Caco-2 (cell line): ENCODE measurements at regions of chr2 and their contacts with region 1.

Region 1: DNA sequence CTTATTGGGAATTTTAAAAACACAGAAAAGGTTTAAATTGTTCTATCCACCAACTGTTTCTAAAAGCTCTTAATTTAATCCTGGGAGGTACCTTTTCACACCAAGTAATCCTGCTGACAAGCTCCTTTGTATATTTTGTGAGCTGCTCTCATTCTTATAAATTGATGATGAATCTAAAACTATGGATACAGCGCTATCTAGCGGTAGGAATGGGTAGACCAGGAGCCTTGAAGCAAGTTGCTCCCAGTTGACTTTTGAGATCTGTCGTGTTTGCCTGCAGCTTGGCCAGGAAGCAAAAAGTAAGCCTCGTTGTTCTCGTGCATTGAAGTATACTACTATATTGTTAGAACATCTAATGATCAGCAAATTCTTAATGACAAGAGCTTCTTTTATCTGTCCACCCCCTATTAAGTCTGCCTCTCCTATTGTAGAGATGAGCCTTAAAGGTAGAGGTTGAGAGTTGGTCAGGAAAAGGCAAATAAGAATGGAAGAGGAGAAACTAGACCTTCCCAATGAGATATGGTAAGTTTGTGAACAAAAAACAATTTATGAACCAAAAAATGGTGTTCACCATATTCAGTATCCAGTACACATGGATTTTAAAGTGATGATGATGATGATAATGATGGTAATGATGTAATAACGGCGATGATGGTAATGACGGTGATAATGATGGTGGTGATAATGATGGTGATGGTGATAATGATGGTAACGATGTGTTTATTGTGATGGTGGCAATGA is 212.0 kb upstream of the NCKAP5 start:
- DNase-seq: peak; percentile 56 to 78
- H3K4me3 ChIP-seq: no peak overlapping the region
- H3K4me3 Mint-ChIP-seq: no peak overlapping the region
- H3K27ac Mint-ChIP-seq: no peak overlapping the region
- H3K4me1 ChIP-seq: 0 out of 2 replicates have a peak, but pooled peaks cover 4% of the 10 kb centered on the region
- H3K4me1 Mint-ChIP-seq: no peaks in the 10 kb centered on the region
- H3K27me3 ChIP-seq: no peaks in the 10 kb centered on the region
- H3K27me3 Mint-ChIP-seq: no peaks in the 10 kb centered on the region
- CTCF ChIP-seq: peak; percentile 84 to 91

Region 2: GRCh38 chr2:133266041-133266925 is 514.0 kb before region 1 on chr2:
- CTCF ChIA-PET with region 1: interaction called, 3 read pairs
- POLR2A ChIA-PET with region 1: no interaction called
- intact Hi-C with region 1: loop called (anchors 10 kb)
- DNase-seq: no peak
- H3K4me3 ChIP-seq: peak overlapping the region; percentile 24; the same call in 1 of the 2 replicates
- H3K4me3 Mint-ChIP-seq: peak overlapping the region; percentile 66
- H3K27ac Mint-ChIP-seq: no peak overlapping the region
- H3K4me1 ChIP-seq: no peaks in the 10 kb centered on the region
- H3K4me1 Mint-ChIP-seq: peaks cover 15% of the 10 kb centered on the region
- H3K27me3 ChIP-seq: no peaks in the 10 kb centered on the region
- H3K27me3 Mint-ChIP-seq: no peaks in the 10 kb centered on the region
- CTCF ChIP-seq: no peak

Region 3: DNA sequence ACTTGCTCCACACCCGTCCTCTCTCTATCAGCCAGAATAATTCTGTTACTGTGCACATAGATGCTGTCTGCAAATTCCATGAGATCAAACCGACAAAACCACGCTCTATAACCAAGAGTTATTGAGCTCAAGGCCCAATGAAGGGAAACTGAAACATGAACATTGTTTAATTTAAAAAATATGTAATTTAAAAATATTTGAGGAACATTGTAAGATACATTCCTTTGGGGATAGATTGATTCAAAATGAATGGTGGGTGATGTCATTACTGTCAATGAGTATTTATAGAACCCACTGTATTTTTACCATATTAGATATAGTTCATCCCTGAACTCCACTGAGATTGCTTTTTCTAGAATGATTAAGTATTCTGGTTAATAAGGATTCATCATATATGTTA is 262.4 kb before region 1 on chr2:
- CTCF ChIA-PET with region 1: interaction called, 13 read pairs
- POLR2A ChIA-PET with region 1: no interaction called
- intact Hi-C with region 1: no loop called
- DNase-seq: no peak
- H3K4me3 ChIP-seq: no peak overlapping the region
- H3K4me3 Mint-ChIP-seq: no peak overlapping the region
- H3K27ac Mint-ChIP-seq: no peak overlapping the region
- H3K4me1 ChIP-seq: no peaks in the 10 kb centered on the region
- H3K4me1 Mint-ChIP-seq: no peaks in the 10 kb centered on the region
- H3K27me3 ChIP-seq: no peaks in the 10 kb centered on the region
- H3K27me3 Mint-ChIP-seq: no peaks in the 10 kb centered on the region
- CTCF ChIP-seq: no peak

Region 4: DNA sequence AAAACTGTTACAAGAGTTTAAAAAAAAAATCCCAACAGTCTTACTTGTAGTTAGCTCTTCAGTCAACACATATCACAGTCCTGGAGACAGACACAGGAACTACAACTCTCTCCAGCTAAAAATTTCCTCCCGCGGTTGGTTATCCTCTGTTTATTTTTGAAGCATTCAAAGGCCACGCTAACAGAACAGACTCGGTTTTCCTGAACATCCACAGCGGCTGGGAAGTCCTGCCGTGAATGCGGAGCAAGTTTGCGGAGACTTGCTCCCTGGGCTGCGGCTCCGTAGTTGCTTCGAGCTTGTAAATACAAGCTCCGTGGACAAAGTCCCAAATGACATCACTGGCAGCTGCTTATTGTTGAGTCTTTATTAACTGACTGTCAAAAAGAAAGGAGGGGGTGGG is 212.1 kb before region 1 on chr2 and contains the start of gene NCKAP5:
- CTCF ChIA-PET with region 1: interaction called, 5 read pairs
- POLR2A ChIA-PET with region 1: no interaction called
- intact Hi-C with region 1: loop called (anchors 5 kb)
- DNase-seq: peak; percentile 60 to 67
- H3K4me3 ChIP-seq: peak within 1 kb of the TSS; percentile 18
- H3K4me3 Mint-ChIP-seq: peak within 1 kb of the TSS; percentile 71
- H3K27ac Mint-ChIP-seq: peak within 1 kb of the TSS; percentile 61
- H3K4me1 ChIP-seq: peaks cover 19% of the 10 kb centered on the region
- H3K4me1 Mint-ChIP-seq: peaks cover 27% of the 10 kb centered on the region
- H3K27me3 ChIP-seq: no peaks in the 10 kb centered on the region
- H3K27me3 Mint-ChIP-seq: no peaks in the 10 kb centered on the region
- CTCF ChIP-seq: no peak
- total RNA-seq, gene NCKAP5: 3.5 and 3.8 TPM in 2 replicates

Region 5: GRCh38 chr2:133667085-133667484 is 113.2 kb before region 1 on chr2:
- CTCF ChIA-PET with region 1: interaction called, 3 read pairs
- POLR2A ChIA-PET with region 1: no interaction called
- intact Hi-C with region 1: loop called (anchors 1 kb)
- DNase-seq: no peak
- H3K4me3 ChIP-seq: no peak overlapping the region
- H3K4me3 Mint-ChIP-seq: no peak overlapping the region
- H3K27ac Mint-ChIP-seq: no peak overlapping the region
- H3K4me1 ChIP-seq: peaks cover 3% of the 10 kb centered on the region
- H3K4me1 Mint-ChIP-seq: peaks cover 2% of the 10 kb centered on the region
- H3K27me3 ChIP-seq: no peaks in the 10 kb centered on the region
- H3K27me3 Mint-ChIP-seq: no peaks in the 10 kb centered on the region
- CTCF ChIP-seq: no peak